Right ventricle myocardium inferior (tissue), 1 donor: ENCODE measurements at regions of chr10 and their contacts with region 1.

Region 1: GRCh38 chr10:103859161-103860086 is 4.0 kb upstream of the SH3PXD2A start:
- DNase-seq: no peak
- ATAC-seq: peak; percentile 68

Region 2: GRCh38 chr10:103618575-103619423 is 240.6 kb before region 1 on chr10:
- intact Hi-C with region 1: no loop called
- DNase-seq: peak; percentile 88
- ATAC-seq: peak; percentile 64

Region 3: DNA sequence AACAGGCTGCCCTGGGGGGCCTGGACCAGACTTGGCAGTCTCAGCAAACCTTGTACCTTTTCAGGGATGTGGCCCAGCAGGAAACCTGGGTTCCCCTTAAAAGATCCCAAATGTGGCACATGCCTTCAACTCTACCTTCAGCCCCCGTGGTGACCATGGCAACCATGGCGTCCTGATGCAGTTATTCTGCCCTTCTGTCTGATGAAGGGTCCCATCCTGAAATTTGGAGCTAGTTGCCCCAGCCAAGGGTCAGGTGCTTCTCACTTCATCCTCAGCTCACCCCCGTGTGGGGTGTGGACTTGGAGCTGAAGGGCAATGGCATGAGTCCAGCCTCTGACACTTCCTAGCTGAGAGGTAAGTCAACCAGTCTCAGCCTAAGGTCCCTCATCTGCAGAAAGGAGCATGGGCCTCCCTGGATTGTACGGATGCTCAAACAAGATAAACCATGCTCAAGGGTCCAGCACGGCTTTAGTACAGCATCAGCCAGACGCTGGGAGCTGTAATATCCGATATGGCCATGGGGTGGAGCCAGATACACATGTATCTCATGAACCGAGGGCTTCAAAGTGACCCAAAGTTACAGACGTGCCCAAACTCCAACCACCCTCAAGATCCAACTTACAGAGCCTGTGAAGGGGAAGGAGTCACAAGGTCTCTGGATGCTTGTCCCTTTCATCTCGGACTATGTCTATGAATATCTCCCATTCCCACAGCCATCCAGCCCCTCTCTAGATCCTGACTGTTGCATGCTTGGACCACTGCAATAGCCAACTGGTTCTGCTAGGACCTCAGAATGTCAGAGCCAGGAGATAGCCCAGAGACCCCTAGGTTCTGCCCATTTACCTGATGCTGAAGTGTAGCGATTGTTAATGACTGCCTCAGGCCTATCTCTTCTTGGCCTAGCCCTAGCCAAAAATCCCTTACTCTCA is 146.6 kb before region 1 on chr10:
- intact Hi-C with region 1: loop called (anchors 1 kb)
- DNase-seq: peak; percentile 81
- ATAC-seq: peak; percentile 86

Region 4: GRCh38 chr10:103772096-103772845 is 87.2 kb before region 1 on chr10:
- intact Hi-C with region 1: loop called (anchors 5 kb)
- DNase-seq: peak; percentile 92
- ATAC-seq: peak; percentile 95

Region 5: DNA sequence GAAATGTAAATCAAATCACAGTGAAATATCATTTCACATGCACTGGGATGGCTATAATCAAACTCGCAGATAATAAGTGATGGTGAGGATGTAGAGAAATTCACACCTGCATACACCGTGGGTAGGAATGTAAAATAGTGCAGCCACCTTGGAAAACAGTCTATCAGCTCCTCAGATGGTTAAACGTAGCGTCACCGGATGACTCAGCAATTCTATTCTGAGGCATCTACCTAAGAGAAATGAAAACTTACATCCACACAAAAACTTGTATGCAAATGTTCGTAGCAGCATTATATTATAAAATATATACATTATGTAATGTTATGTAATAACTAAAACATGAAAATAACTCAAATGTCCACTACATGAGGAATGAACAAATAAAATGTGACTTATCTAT is 43.0 kb before region 1 on chr10:
- intact Hi-C with region 1: loop called (anchors 5 kb)
- DNase-seq: no peak
- ATAC-seq: no peak

Region 6: DNA sequence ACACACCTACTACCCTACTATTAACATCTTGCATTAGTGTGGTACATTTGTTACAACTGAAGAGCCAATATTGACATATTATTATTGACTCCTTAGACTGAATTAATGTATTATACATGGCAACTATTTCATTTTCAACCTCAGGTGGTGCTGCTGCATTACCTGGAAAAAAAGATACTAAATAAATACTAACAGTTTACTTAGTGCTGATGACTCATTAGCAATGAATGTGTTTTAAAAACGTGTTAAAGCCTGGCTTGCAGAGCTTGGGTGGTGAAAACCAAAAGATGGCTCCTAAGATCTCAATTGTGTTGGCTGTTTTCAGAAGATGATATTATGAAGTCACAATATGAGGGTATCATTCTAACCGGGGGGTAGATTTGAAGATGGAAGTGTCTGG is 337.9 kb after region 1 on chr10:
- intact Hi-C with region 1: no loop called
- DNase-seq: no peak
- ATAC-seq: no peak